ENCODE measurements at regions of chr5 and their contacts with region 1.

Region 1: GRCh38 chr5:122091936-122092600 is 14.0 kb upstream of the LOX start:
- DNase-seq: peak; percentile 61
- ATAC-seq: peak; percentile 67
- H3K4me3 ChIP-seq: no peak overlapping the region
- H3K27ac ChIP-seq: no peak overlapping the region
- H3K4me1 ChIP-seq: no peaks in the 10 kb centered on the region
- H3K27me3 ChIP-seq: no peaks in the 10 kb centered on the region
- CTCF ChIP-seq: peak; percentile 68

Region 2: GRCh38 chr5:122156724-122157325 is 64.8 kb after region 1 on chr5:
- CTCF ChIA-PET with region 1: interaction called, 4 read pairs
- POLR2A ChIA-PET with region 1: no interaction called
- intact Hi-C with region 1: loop called (anchors 1 kb)
- DNase-seq: peak; percentile 51
- ATAC-seq: peak; percentile 51; the same call in 1 of the 2 replicates
- H3K4me3 ChIP-seq: no peak overlapping the region
- H3K27ac ChIP-seq: no peak overlapping the region
- H3K4me1 ChIP-seq: peaks cover 14% of the 10 kb centered on the region
- H3K27me3 ChIP-seq: no peaks in the 10 kb centered on the region
- CTCF ChIP-seq: peak; percentile 58

Measured in PC-3 (cell line).